Natural killer cell (primary cell): ENCODE measurements at regions of chr19 and their contacts with region 1.

Region 1: DNA sequence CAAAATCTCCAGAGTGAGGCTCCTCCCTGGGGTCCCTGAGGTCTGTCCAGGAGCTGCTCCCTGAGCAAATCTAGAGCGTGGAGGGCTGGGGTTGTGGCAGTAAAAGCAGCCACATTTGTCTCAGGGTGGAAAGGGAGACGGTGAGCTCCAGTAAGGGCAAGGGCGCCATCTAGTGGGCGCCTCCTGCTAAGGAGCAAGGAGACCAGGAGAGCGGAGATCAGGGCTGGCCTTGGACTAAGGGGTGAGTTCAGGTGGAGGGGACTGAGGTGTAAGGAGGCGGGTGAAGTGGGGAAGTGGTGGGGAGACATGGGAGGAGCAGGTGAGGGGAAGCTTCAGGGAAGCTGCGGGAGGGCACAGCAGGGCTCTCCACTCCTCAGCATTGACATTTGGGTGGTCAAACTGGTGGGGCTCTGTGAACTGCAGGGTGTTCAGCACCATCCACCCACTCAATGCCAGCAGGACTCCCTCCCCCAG is 5.3 kb upstream of the CEACAM21 start:
- DNase-seq: peak; percentile 79 to 95
- ATAC-seq: peak; percentile 93 to 99 (median 98)
- H3K4me3 ChIP-seq: no peak overlapping the region
- H3K4me3 Mint-ChIP-seq: no peak overlapping the region
- H3K27ac ChIP-seq: no peak overlapping the region
- H3K27ac Mint-ChIP-seq: no peak overlapping the region
- H3K4me1 ChIP-seq: peaks cover 15% of the 10 kb centered on the region
- H3K4me1 Mint-ChIP-seq: peaks cover 30 to 33% of the 10 kb centered on the region in 2 donors
- H3K27me3 ChIP-seq: no peaks in the 10 kb centered on the region
- H3K27me3 Mint-ChIP-seq: no peaks in the 10 kb centered on the region
- CTCF ChIP-seq: peak; percentile 88

Region 2: GRCh38 chr19:41449079-41449864 is 121.4 kb before region 1 on chr19:
- intact Hi-C with region 1: loop called (anchors 1 kb)
- DNase-seq: peak; percentile 71 to 85
- ATAC-seq: peak; percentile 87 to 96 (median 94)
- H3K4me3 ChIP-seq: no peak overlapping the region
- H3K4me3 Mint-ChIP-seq: peak overlapping the region; percentile 45
- H3K27ac ChIP-seq: no peak overlapping the region
- H3K27ac Mint-ChIP-seq: no peak overlapping the region
- H3K4me1 ChIP-seq: peaks cover 9% of the 10 kb centered on the region
- H3K4me1 Mint-ChIP-seq: peaks cover 0 to 8% of the 10 kb centered on the region in 2 donors
- H3K27me3 ChIP-seq: peaks cover 3% of the 10 kb centered on the region
- H3K27me3 Mint-ChIP-seq: peaks cover 14% of the 10 kb centered on the region in 2 donors
- CTCF ChIP-seq: peak; percentile 92

Region 3: DNA sequence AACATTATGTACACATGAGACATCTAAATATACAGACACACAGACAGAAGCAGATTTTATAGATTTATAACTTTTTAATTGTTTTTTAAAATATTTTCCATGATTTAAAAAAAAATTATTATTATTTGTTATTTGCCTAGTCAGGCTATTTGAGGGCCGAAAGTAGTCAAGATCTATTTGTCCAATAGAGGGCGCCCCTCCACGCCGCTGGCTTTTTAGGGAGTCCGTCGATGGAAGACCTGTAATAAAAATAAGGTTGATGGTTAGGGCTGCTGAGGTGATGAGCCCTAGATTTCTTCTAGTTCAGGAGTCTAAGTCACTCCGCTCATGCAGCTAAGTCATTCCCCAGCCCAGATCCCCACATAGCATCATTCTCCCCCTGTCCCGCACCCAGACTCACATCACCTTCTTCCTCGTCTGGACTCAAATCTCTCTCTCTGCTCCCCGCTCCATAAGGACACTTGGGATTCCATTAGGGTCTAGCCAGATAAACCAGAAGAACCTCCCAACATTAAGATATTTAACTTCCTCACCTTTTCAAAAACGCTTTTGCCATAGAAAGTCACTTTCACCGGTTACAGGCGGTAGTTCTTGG is 28.6 kb before region 1 on chr19:
- intact Hi-C with region 1: loop called (anchors 1 kb)
- DNase-seq: peak; percentile 74 to 88
- ATAC-seq: peak; percentile 32 to 57 (median 57)
- H3K4me3 ChIP-seq: no peak overlapping the region
- H3K4me3 Mint-ChIP-seq: peak overlapping the region; percentile 65
- H3K27ac ChIP-seq: no peak overlapping the region
- H3K27ac Mint-ChIP-seq: peak overlapping the region in 1 of 2 donors; percentile 1
- H3K4me1 ChIP-seq: peaks cover 33% of the 10 kb centered on the region
- H3K4me1 Mint-ChIP-seq: peaks cover 40 to 41% of the 10 kb centered on the region in 2 donors
- H3K27me3 ChIP-seq: no peaks in the 10 kb centered on the region
- H3K27me3 Mint-ChIP-seq: no peaks in the 10 kb centered on the region
- CTCF ChIP-seq: peak; percentile 92